CD8-positive, alpha-beta T cell (primary cell): ENCODE measurements at regions of chr19 and their contacts with region 1.

Region 1: GRCh38 chr19:19531951-19532805 is 3.5 kb downstream of the YJEFN3 start:
- DNase-seq: peak; percentile 70 to 95 (median 87)
- ATAC-seq: peak; percentile 83
- H3K4me3 ChIP-seq: no peak overlapping the region
- H3K4me3 Mint-ChIP-seq: no peak overlapping the region
- H3K27ac ChIP-seq: no peak overlapping the region
- H3K27ac Mint-ChIP-seq: no peak overlapping the region
- H3K4me1 ChIP-seq: peaks cover 9% of the 10 kb centered on the region
- H3K4me1 Mint-ChIP-seq: peaks cover 12% of the 10 kb centered on the region
- H3K27me3 ChIP-seq: no peaks in the 10 kb centered on the region
- H3K27me3 Mint-ChIP-seq: no peaks in the 10 kb centered on the region
- CTCF ChIP-seq: peak; percentile 96

Region 2: DNA sequence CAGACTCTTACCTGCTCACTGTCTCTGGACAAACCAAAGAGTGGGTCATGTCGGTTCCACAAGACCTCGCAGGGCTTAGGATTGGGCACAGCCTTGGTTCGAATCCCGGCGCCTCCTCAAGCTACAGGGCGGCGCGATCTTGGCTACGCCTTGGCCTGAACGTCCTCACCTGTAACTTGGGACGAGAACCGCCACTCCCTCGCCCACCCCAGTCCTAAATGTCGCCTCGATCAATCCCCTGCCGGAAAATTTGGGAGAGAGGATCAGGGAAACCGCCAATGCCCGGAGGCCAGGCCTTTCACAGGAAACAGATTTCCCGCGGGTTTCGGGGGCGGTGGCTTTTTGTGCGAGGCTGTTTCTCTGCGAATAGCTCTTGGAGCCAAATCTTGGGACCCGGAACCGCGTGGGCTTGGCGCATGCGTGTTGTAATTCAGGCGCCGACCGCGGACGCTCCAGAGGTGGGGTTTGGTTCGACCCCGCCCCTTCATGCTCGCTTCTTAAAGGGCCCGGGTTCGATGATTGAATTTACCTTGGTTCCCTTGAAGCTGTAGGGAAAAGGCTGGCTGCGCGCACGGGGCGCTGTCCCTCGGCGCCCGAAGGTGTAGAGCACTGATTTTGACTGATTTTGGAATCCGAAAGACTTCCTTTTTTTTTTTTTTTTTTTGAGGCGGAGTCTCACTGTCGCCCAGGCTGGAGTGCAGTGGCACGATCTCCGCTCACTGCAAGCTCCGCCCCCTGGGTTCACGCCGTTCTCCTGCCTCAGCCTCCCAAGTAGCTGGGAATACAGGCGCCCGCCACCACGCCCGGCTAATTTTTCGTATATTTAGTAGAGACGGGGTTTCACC is 328.9 kb before region 1 on chr19 and contains the start of gene NR2C2AP:
- CTCF ChIA-PET with region 1: no interaction called
- POLR2A ChIA-PET with region 1: no interaction called
- intact Hi-C with region 1: no loop called
- DNase-seq: peak; percentile 79 to 96 (median 93)
- ATAC-seq: peak; percentile 95
- H3K4me3 ChIP-seq: peak within 1 kb of the TSS; percentile 78 to 96
- H3K4me3 Mint-ChIP-seq: peak within 1 kb of the TSS; percentile 91
- H3K27ac ChIP-seq: peak within 1 kb of the TSS; percentile 65 to 80
- H3K27ac Mint-ChIP-seq: peak within 1 kb of the TSS; percentile 90
- H3K4me1 ChIP-seq: peaks cover 27% of the 10 kb centered on the region
- H3K4me1 Mint-ChIP-seq: peaks cover 28% of the 10 kb centered on the region
- H3K27me3 ChIP-seq: peaks cover 0 to 5% of the 10 kb centered on the region in 2 experiments
- H3K27me3 Mint-ChIP-seq: peaks cover 3% of the 10 kb centered on the region
- CTCF ChIP-seq: no peak
- total RNA-seq, gene NR2C2AP: 9.5 to 12.5 TPM

Region 3: DNA sequence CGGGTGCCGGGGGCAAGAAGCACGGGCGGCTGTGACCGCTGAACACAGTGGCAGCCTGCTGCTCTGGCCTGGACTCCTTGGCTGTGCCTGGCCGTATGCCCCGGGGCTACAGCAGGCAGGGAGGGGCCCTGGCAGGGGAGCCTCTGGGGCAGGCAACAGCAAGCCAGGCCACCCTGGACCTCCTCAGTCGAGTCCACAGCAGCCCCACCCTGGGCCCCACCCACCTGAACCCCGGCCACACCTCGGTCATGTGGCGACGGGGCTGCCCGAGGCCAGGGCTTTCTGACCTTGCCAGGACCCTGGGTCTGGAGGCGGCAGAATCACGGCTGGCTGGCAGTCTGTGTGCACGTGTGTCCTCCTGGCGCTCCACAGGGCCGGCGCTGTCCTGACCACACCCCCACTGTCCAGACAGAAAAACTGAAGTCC is 14.6 kb after region 1 on chr19:
- CTCF ChIA-PET with region 1: interaction called, 65 read pairs
- POLR2A ChIA-PET with region 1: no interaction called
- intact Hi-C with region 1: no loop called
- DNase-seq: no peak
- ATAC-seq: no peak
- H3K4me3 ChIP-seq: no peak overlapping the region
- H3K4me3 Mint-ChIP-seq: no peak overlapping the region
- H3K27ac ChIP-seq: no peak overlapping the region
- H3K27ac Mint-ChIP-seq: no peak overlapping the region
- H3K4me1 ChIP-seq: peaks cover 8% of the 10 kb centered on the region
- H3K4me1 Mint-ChIP-seq: peaks cover 5% of the 10 kb centered on the region
- H3K27me3 ChIP-seq: no peaks in the 10 kb centered on the region
- H3K27me3 Mint-ChIP-seq: peaks cover 8% of the 10 kb centered on the region
- CTCF ChIP-seq: no peak

Region 4: GRCh38 chr19:19554074-19555023 is 22.2 kb after region 1 on chr19:
- CTCF ChIA-PET with region 1: interaction called, 65 read pairs
- POLR2A ChIA-PET with region 1: no interaction called
- intact Hi-C with region 1: loop called (anchors 2 kb)
- DNase-seq: peak in 7 of 9 experiments; percentile 45 to 76 (median 64)
- ATAC-seq: peak; percentile 60
- H3K4me3 ChIP-seq: no peak overlapping the region
- H3K4me3 Mint-ChIP-seq: no peak overlapping the region
- H3K27ac ChIP-seq: no peak overlapping the region
- H3K27ac Mint-ChIP-seq: no peak overlapping the region
- H3K4me1 ChIP-seq: no peaks in the 10 kb centered on the region
- H3K4me1 Mint-ChIP-seq: peaks cover 4% of the 10 kb centered on the region
- H3K27me3 ChIP-seq: no peaks in the 10 kb centered on the region
- H3K27me3 Mint-ChIP-seq: peaks cover 5% of the 10 kb centered on the region
- CTCF ChIP-seq: peak; percentile 84

Region 5: GRCh38 chr19:19637523-19638251 is 105.5 kb after region 1 on chr19:
- CTCF ChIA-PET with region 1: interaction called, 19 read pairs
- POLR2A ChIA-PET with region 1: no interaction called
- intact Hi-C with region 1: no loop called
- DNase-seq: no peak
- ATAC-seq: peak; percentile 39
- H3K4me3 ChIP-seq: no peak overlapping the region
- H3K4me3 Mint-ChIP-seq: no peak overlapping the region
- H3K27ac ChIP-seq: no peak overlapping the region
- H3K27ac Mint-ChIP-seq: no peak overlapping the region
- H3K4me1 ChIP-seq: peaks cover 18% of the 10 kb centered on the region
- H3K4me1 Mint-ChIP-seq: peaks cover 27% of the 10 kb centered on the region
- H3K27me3 ChIP-seq: no peaks in the 10 kb centered on the region
- H3K27me3 Mint-ChIP-seq: no peaks in the 10 kb centered on the region
- CTCF ChIP-seq: no peak

Region 6: GRCh38 chr19:19652456-19653295 is 120.5 kb after region 1 on chr19:
- CTCF ChIA-PET with region 1: interaction called, 93 read pairs
- POLR2A ChIA-PET with region 1: no interaction called
- intact Hi-C with region 1: no loop called
- DNase-seq: no peak
- ATAC-seq: no peak
- H3K4me3 ChIP-seq: no peak overlapping the region
- H3K4me3 Mint-ChIP-seq: no peak overlapping the region
- H3K27ac ChIP-seq: no peak overlapping the region
- H3K27ac Mint-ChIP-seq: no peak overlapping the region
- H3K4me1 ChIP-seq: no peaks in the 10 kb centered on the region
- H3K4me1 Mint-ChIP-seq: no peaks in the 10 kb centered on the region
- H3K27me3 ChIP-seq: no peaks in the 10 kb centered on the region
- H3K27me3 Mint-ChIP-seq: no peaks in the 10 kb centered on the region
- CTCF ChIP-seq: no peak

Region 7: GRCh38 chr19:19732579-19733501 is 200.7 kb after region 1 on chr19 and contains the start of gene ZNF14:
- CTCF ChIA-PET with region 1: no interaction called
- POLR2A ChIA-PET with region 1: no interaction called
- intact Hi-C with region 1: loop called (anchors 5 to 10 kb)
- DNase-seq: peak; percentile 77 to 96 (median 92)
- ATAC-seq: peak; percentile 99
- H3K4me3 ChIP-seq: peak within 1 kb of the TSS; percentile 84 to 99
- H3K4me3 Mint-ChIP-seq: peak within 1 kb of the TSS; percentile 100
- H3K27ac ChIP-seq: peak within 1 kb of the TSS; percentile 79 to 82
- H3K27ac Mint-ChIP-seq: peak within 1 kb of the TSS; percentile 93
- H3K4me1 ChIP-seq: peaks cover 13% of the 10 kb centered on the region
- H3K4me1 Mint-ChIP-seq: peaks cover 29% of the 10 kb centered on the region
- H3K27me3 ChIP-seq: no peaks in the 10 kb centered on the region
- H3K27me3 Mint-ChIP-seq: no peaks in the 10 kb centered on the region
- CTCF ChIP-seq: no peak
- total RNA-seq, gene ZNF14: 40.7 to 44.9 TPM

Region 8: GRCh38 chr19:19956434-19957075 is 424.4 kb after region 1 on chr19:
- CTCF ChIA-PET with region 1: interaction called, 45 read pairs
- POLR2A ChIA-PET with region 1: no interaction called
- intact Hi-C with region 1: loop called in 1 of 2 experiments (anchors 1 kb)
- DNase-seq: no peak
- ATAC-seq: no peak
- H3K4me3 ChIP-seq: no peak overlapping the region
- H3K4me3 Mint-ChIP-seq: no peak overlapping the region
- H3K27ac ChIP-seq: no peak overlapping the region
- H3K27ac Mint-ChIP-seq: no peak overlapping the region
- H3K4me1 ChIP-seq: no peaks in the 10 kb centered on the region
- H3K4me1 Mint-ChIP-seq: peaks cover 3% of the 10 kb centered on the region
- H3K27me3 ChIP-seq: no peaks in the 10 kb centered on the region
- H3K27me3 Mint-ChIP-seq: no peaks in the 10 kb centered on the region
- CTCF ChIP-seq: no peak